ENCODE measurements at regions of chr6 and their contacts with region 1.

Region 1: DNA sequence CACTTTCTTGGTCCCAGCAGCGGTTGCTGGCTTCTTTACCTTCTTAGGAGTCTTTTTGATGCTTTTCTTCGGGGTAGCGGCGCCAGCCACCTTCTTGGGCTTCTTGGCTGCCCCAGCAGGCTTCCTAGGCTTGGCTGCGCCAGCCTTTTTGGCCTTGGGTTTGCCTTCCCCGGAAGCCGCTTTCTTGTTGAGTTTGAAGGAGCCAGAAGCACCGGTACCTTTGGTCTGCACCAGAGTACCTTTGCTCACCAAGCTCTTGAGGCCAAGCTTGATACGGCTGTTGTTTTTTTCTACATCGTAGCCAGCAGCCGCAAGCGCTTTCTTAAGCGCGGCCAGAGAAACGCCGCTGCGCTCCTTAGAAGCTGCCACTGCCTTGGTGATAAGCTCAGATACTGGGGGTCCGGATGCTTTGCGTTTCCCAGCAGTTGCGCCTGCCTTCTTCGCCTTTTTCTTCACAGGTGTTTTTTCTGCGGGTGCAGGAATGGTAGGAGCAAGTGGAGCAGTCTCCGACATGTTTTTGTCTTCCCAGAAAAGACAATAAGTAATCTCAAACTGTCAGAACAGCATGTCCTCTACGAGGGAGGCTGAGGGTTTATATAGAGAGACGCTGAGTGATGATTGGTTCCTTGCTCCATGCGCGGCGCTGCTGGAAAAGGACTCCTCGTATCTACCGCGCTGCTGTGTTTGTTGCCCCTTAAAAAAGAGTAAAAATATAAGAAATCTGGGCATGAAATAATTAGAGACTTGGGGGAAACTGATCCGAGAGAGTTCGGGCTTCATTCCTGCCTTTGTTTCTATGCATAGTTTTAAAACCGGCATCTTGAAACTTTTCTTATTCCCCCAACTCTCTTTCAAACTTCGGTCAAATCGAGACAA is 130.3 kb upstream of the BTN3A2 start:
- DNase-seq: peak; percentile 86
- H3K4me3 Mint-ChIP-seq: peak overlapping the region; percentile 85
- H3K27ac Mint-ChIP-seq: peak overlapping the region; percentile 100
- H3K4me1 Mint-ChIP-seq: peaks cover 54% of the 10 kb centered on the region
- H3K27me3 Mint-ChIP-seq: no peaks in the 10 kb centered on the region

Region 2: GRCh38 chr6:26045065-26045927 is 189.4 kb before region 1 on chr6:
- CTCF ChIA-PET with region 1: interaction called, 3 read pairs
- POLR2A ChIA-PET with region 1: interaction called, 15 read pairs
- DNase-seq: peak; percentile 93
- H3K4me3 Mint-ChIP-seq: peak overlapping the region; percentile 83
- H3K27ac Mint-ChIP-seq: peak overlapping the region; percentile 99
- H3K4me1 Mint-ChIP-seq: peaks cover 44% of the 10 kb centered on the region
- H3K27me3 Mint-ChIP-seq: no peaks in the 10 kb centered on the region

Region 3: DNA sequence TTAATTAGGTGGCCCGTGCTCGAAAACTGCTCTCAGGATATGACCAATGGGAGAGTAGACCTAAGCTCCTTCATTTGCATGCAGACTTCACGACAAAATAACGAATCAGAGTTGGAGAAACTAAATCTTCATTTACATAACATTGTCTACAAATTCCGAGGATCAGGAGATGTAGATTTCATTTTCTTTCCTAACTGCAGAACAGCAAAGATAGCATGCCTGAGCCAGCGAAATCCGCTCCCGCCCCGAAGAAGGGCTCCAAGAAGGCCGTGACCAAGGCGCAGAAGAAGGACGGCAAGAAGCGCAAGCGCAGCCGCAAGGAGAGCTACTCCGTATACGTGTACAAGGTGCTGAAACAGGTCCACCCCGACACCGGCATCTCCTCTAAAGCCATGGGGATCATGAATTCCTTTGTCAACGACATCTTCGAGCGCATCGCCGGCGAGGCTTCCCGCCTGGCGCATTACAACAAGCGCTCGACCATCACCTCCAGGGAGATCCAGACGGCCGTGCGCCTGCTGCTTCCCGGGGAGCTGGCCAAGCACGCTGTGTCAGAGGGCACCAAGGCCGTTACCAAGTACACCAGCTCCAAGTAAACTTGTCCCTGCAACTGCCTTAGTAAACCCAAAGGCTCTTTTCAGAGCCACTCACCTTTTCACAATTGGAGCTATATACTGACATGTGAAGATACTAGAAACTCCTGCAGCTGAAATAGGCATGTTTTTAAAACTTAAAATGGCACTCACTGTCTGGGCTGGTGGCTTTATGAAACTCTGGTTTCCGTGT is 50.9 kb before region 1 on chr6:
- CTCF ChIA-PET with region 1: interaction called, 3 read pairs
- POLR2A ChIA-PET with region 1: interaction called, 18 read pairs
- DNase-seq: peak; percentile 75
- H3K4me3 Mint-ChIP-seq: peak overlapping the region; percentile 91
- H3K27ac Mint-ChIP-seq: peak overlapping the region; percentile 99
- H3K4me1 Mint-ChIP-seq: peaks cover 73% of the 10 kb centered on the region
- H3K27me3 Mint-ChIP-seq: no peaks in the 10 kb centered on the region

Region 4: DNA sequence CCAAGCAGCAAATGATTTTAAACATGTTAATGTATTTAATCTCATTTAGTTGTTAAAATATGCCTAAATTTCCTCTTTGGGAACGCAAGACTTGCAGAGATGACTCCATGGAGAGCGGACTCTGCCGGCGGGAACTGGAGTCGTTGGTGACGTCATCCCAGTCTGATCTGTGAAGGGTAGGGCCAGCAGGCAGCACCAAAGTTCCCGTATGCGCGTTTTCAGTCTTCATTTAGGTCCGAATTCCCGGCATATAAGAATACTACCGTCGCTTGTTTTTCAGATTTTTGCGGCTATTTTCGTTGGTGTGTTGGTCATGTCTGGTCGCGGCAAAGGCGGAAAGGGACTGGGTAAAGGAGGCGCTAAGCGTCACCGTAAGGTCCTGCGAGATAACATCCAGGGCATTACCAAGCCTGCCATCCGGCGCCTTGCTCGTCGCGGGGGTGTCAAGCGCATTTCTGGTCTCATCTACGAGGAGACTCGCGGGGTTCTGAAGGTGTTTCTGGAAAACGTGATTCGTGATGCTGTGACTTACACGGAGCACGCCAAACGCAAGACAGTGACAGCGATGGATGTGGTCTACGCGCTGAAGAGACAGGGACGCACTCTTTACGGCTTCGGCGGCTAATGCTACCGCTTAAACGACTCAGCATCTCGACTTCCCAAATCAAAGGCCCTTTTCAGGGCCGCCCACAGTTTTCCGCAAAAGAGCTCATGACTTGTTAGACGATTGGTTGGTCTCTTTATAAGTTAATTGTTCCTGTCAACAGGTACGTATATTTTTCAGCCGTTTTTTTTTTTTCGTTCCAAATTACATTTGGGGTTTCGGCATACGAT is 30.1 kb before region 1 on chr6:
- CTCF ChIA-PET with region 1: interaction called, 10 read pairs
- POLR2A ChIA-PET with region 1: interaction called, 104 read pairs
- DNase-seq: peak; percentile 95
- H3K4me3 Mint-ChIP-seq: no peak overlapping the region
- H3K27ac Mint-ChIP-seq: no peak overlapping the region
- H3K4me1 Mint-ChIP-seq: peaks cover 38% of the 10 kb centered on the region
- H3K27me3 Mint-ChIP-seq: peaks cover 2% of the 10 kb centered on the region

Region 5: DNA sequence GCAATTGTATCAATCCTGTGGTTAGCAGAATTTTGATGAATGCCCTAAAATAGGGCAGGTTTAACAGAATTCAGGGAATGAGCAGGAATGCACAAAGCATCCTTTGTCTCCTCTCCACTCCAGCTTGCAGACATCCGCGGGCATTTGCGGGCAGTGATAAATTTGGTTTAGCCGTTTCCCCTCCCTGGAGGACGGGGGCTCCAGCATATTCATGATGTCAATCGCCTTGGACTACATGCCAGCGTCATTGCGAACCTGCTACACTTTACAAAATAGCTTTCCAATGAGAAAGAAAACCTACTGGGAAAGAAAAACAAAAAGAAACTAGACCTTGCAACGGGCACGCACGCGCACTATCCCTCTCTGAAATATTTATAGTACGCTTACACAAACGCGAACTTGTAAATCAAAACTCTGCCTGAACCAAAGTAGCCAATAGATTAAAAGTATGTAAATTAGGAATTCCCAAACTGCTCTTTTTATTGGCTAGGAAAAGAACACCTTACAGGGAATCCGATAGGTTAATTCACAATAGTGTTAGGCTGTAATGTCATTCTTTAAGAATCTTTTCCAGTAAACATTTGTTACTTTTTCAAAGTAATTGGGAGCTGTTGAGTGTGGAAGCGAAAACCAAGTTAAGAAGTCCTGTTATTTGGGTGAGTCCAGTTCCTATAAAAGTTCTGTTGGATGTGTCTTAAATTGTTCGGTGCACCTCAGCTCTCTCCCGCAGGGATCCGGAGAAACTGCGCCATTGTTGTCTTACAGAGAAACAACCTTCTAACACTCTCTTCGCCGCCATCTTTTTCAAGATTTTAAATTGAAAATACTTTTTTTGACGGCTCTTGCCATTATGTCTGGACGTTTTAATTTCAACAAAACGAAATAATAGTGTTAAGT is 10.8 kb before region 1 on chr6:
- CTCF ChIA-PET with region 1: interaction called, 13 read pairs
- POLR2A ChIA-PET with region 1: interaction called, 33 read pairs
- DNase-seq: peak; percentile 82
- H3K4me3 Mint-ChIP-seq: no peak overlapping the region
- H3K27ac Mint-ChIP-seq: no peak overlapping the region
- H3K4me1 Mint-ChIP-seq: peaks cover 43% of the 10 kb centered on the region
- H3K27me3 Mint-ChIP-seq: no peaks in the 10 kb centered on the region

Region 6: GRCh38 chr6:26249957-26250697 is 15.5 kb after region 1 on chr6:
- CTCF ChIA-PET with region 1: interaction called, 28 read pairs
- POLR2A ChIA-PET with region 1: interaction called, 19 read pairs
- DNase-seq: peak; percentile 82
- H3K4me3 Mint-ChIP-seq: peak overlapping the region; percentile 98
- H3K27ac Mint-ChIP-seq: peak overlapping the region; percentile 100
- H3K4me1 Mint-ChIP-seq: peaks cover 40% of the 10 kb centered on the region
- H3K27me3 Mint-ChIP-seq: no peaks in the 10 kb centered on the region